ENCODE measurements at regions of chr11 and their contacts with region 1.

Region 1: GRCh38 chr11:3160252-3161031 is 4.7 kb downstream of the OSBPL5 start:
- DNase-seq: peak; percentile 74
- H3K4me3 ChIP-seq: peak overlapping the region; percentile 29
- H3K27ac ChIP-seq: peak overlapping the region; percentile 62 to 66
- H3K4me1 ChIP-seq: peaks cover 19% of the 10 kb centered on the region
- H3K27me3 ChIP-seq: no peaks in the 10 kb centered on the region
- CTCF ChIP-seq: no peak
- POLR2A ChIP-seq: peak; percentile 6

Region 2: GRCh38 chr11:3123761-3124733 is 36.4 kb before region 1 on chr11:
- intact Hi-C with region 1: loop called (anchors 2 kb)
- DNase-seq: peak; percentile 83
- H3K4me3 ChIP-seq: no peak overlapping the region
- H3K27ac ChIP-seq: peak overlapping the region; percentile 68 to 72
- H3K4me1 ChIP-seq: peaks cover 19% of the 10 kb centered on the region
- H3K27me3 ChIP-seq: no peaks in the 10 kb centered on the region
- CTCF ChIP-seq: no peak
- POLR2A ChIP-seq: no peak

Region 3: GRCh38 chr11:3231855-3232744 is 71.7 kb after region 1 on chr11 and contains the start of gene MRGPRE:
- intact Hi-C with region 1: no loop called
- DNase-seq: no peak
- H3K4me3 ChIP-seq: peak within 1 kb of the TSS in 1 of 2 donors; percentile 3
- H3K27ac ChIP-seq: no peak within 1 kb of the TSS
- H3K4me1 ChIP-seq: no peaks in the 10 kb centered on the region
- H3K27me3 ChIP-seq: peaks cover 6% of the 10 kb centered on the region
- CTCF ChIP-seq: no peak
- POLR2A ChIP-seq: no peak
- total RNA-seq, gene MRGPRE: 1.0 TPM in 1 of 2 donors, not detected in the other